CD4-positive, alpha-beta T cell (primary cell): ENCODE measurements at regions of chr16 and their contacts with region 1.

Region 1: DNA sequence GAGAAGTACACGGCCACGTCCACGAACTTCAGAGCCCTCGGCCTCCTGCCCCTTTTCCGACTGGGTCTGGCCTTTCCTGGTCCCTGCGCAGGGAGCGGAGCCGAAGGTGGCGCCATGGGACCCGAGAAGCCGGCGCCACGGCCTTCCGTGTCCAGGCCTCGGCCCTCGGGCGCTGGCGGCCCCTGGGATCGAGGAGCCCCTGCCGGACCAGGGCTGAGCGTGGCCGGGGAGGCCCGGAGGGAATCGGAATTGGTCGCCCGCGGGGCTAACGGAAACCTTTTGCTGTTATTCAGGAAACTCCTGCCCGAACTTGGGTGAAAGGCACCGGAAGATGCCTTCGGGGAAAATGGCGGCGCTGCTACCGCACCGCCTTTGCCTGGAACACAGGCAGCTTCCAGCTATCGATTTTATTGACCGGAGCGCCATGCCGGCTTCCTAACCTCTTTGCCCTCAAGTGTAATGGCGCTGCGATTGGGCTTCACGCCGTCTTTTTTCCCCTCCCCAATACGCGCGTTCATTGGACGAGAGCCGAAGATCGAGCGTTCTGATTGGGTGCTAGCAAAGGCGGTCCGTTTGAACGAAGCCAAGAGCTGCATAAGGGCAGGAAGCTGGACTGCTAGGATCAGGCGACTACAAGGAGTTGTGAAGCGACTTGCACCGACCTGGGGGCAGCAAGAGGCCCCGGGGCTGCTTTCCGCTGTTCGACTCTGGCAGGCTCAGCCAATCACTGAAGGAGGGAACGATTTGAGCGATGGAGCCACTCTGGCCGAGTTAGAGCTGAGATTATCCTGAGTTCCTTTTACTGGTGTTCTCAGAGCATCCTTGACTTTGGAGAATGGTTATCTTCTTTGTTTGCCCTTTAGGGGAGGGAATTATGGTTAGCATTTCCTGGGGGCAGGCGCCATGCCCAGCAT is at the start of gene ZNF689:
- DNase-seq: peak; percentile 88 to 97 (median 94)
- ATAC-seq: peak; percentile 92
- H3K4me3 ChIP-seq: peak within 1 kb of the TSS; percentile 74
- H3K4me3 Mint-ChIP-seq: peak within 1 kb of the TSS; percentile 91
- H3K27ac ChIP-seq: peak within 1 kb of the TSS; percentile 86 to 89
- H3K27ac Mint-ChIP-seq: peak within 1 kb of the TSS; percentile 93
- H3K4me1 ChIP-seq: peaks cover 26% of the 10 kb centered on the region
- H3K4me1 Mint-ChIP-seq: peaks cover 23% of the 10 kb centered on the region
- H3K27me3 ChIP-seq: no peaks in the 10 kb centered on the region
- H3K27me3 Mint-ChIP-seq: no peaks in the 10 kb centered on the region
- CTCF ChIP-seq: no peak
- total RNA-seq, gene ZNF689: 15.3 to 15.7 TPM

Region 2: GRCh38 chr16:30499284-30499683 is 110.9 kb before region 1 on chr16:
- CTCF ChIA-PET with region 1: no interaction called
- POLR2A ChIA-PET with region 1: no interaction called
- intact Hi-C with region 1: no loop called
- DNase-seq: no peak
- ATAC-seq: no peak
- H3K4me3 ChIP-seq: no peak overlapping the region
- H3K4me3 Mint-ChIP-seq: no peak overlapping the region
- H3K27ac ChIP-seq: no peak overlapping the region
- H3K27ac Mint-ChIP-seq: no peak overlapping the region
- H3K4me1 ChIP-seq: peaks cover 10% of the 10 kb centered on the region
- H3K4me1 Mint-ChIP-seq: peaks cover 9% of the 10 kb centered on the region
- H3K27me3 ChIP-seq: no peaks in the 10 kb centered on the region
- H3K27me3 Mint-ChIP-seq: no peaks in the 10 kb centered on the region
- CTCF ChIP-seq: no peak

Region 3: DNA sequence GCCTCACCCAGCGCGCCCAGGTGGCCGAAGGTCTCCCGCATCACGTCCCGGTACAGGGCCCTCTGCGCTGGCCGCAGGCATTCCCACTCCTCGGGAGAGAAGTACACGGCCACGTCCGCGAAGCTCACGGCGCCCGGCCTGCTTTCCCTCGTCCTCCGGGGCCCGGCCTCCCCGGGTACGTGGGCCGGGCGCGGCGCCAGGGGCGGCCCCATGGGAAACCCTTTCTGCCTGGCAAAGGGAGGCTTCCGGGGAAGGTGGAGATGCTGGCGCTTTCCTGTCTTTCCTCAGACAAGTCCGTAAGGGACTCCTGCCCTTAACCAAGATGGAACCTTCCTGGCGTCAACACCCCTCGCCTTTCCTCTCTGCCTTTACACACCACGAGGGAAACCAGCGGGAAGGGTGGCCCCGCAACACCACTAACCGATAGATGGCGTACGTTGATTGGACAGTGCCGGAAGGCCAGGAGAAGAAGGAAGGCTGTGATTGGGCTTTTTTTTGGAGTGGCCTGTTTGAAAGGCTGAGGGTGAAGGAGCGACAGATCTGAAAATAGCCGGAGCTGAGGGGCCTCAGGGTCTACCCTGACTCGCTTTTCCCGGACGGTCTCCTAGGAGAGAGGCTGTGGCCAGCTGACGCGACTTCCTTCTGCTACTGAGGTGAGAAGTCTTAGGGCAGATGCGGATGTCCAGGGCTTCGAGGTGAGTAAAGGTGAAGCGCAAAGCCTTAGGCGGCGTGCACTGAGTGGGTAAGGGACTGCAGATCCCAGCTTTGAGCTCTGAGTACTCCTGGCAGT is 24.6 kb before region 1 on chr16 and contains the start of gene ZNF785:
- CTCF ChIA-PET with region 1: no interaction called
- POLR2A ChIA-PET with region 1: interaction called, 13 read pairs
- intact Hi-C with region 1: loop called in 1 of 2 experiments (anchors 2 kb)
- DNase-seq: peak; percentile 81 to 97 (median 87)
- ATAC-seq: peak; percentile 99
- H3K4me3 ChIP-seq: peak within 1 kb of the TSS; percentile 64
- H3K4me3 Mint-ChIP-seq: peak within 1 kb of the TSS; percentile 92
- H3K27ac ChIP-seq: peak within 1 kb of the TSS; percentile 53 to 57
- H3K27ac Mint-ChIP-seq: peak within 1 kb of the TSS; percentile 93
- H3K4me1 ChIP-seq: peaks cover 26% of the 10 kb centered on the region
- H3K4me1 Mint-ChIP-seq: peaks cover 18% of the 10 kb centered on the region
- H3K27me3 ChIP-seq: no peaks in the 10 kb centered on the region
- H3K27me3 Mint-ChIP-seq: no peaks in the 10 kb centered on the region
- CTCF ChIP-seq: no peak
- total RNA-seq, gene ZNF785: 6.6 to 7.7 TPM

Region 4: GRCh38 chr16:30698139-30698815 is 88.1 kb after region 1 on chr16:
- CTCF ChIA-PET with region 1: interaction called, 3 read pairs
- POLR2A ChIA-PET with region 1: interaction called, 3 read pairs
- intact Hi-C with region 1: loop called in 1 of 2 experiments (anchors 5 kb)
- DNase-seq: peak; percentile 97 to 100 (median 99)
- ATAC-seq: peak; percentile 75
- H3K4me3 ChIP-seq: peak overlapping the region; percentile 97
- H3K4me3 Mint-ChIP-seq: peak overlapping the region; percentile 98
- H3K27ac ChIP-seq: peak overlapping the region; percentile 100
- H3K27ac Mint-ChIP-seq: peak overlapping the region; percentile 100
- H3K4me1 ChIP-seq: peaks cover 38% of the 10 kb centered on the region
- H3K4me1 Mint-ChIP-seq: peaks cover 37% of the 10 kb centered on the region
- H3K27me3 ChIP-seq: no peaks in the 10 kb centered on the region
- H3K27me3 Mint-ChIP-seq: no peaks in the 10 kb centered on the region
- CTCF ChIP-seq: no peak